HAP-1 (cell line): ENCODE measurements at regions of chr2 and their contacts with region 1.

Region 1: GRCh38 chr2:73163483-73164367 is 38.6 kb upstream of the NOTO start:
- DNase-seq: peak; percentile 77 to 83
- H3K4me3 ChIP-seq: no peak overlapping the region
- H3K4me1 ChIP-seq: no peaks in the 10 kb centered on the region
- H3K27me3 ChIP-seq: 0 out of 2 replicates have a peak, but pooled peaks cover 3% of the 10 kb centered on the region

Region 2: DNA sequence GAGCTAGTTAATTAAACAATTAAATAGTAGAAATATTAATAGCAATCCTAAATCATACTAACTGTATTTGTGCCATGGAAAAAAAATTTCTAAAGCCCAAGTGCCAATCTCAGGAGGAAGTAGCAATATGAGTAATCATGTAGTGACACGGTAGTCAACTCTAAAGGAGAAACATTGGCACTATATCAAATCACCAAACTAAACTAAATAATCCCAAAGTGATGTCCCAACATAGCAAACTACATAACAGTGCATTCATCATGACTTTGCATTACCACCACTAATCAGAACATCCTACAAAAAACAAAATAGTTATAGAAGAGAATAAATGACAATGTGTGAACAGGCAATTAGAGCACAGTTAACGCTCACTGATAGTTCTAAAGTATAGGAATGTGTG is 533.0 kb before region 1 on chr2:
- in situ Hi-C with region 1: no loop called
- DNase-seq: no peak
- H3K4me3 ChIP-seq: no peak overlapping the region
- H3K4me1 ChIP-seq: no peaks in the 10 kb centered on the region
- H3K27me3 ChIP-seq: no peaks in the 10 kb centered on the region

Region 3: GRCh38 chr2:72892506-72893173 is 271.1 kb before region 1 on chr2:
- in situ Hi-C with region 1: loop called (anchors 5 kb)
- DNase-seq: peak in 1 of 2 experiments; percentile 58
- H3K4me3 ChIP-seq: no peak overlapping the region
- H3K4me1 ChIP-seq: peaks cover 4% of the 10 kb centered on the region
- H3K27me3 ChIP-seq: 0 out of 2 replicates have a peak, but pooled peaks cover 2% of the 10 kb centered on the region

Region 4: GRCh38 chr2:72993147-72993932 is 170.4 kb before region 1 on chr2:
- in situ Hi-C with region 1: loop called (anchors 5 kb)
- DNase-seq: peak; percentile 18 to 71
- H3K4me3 ChIP-seq: no peak overlapping the region
- H3K4me1 ChIP-seq: no peaks in the 10 kb centered on the region
- H3K27me3 ChIP-seq: no peaks in the 10 kb centered on the region

Region 5: DNA sequence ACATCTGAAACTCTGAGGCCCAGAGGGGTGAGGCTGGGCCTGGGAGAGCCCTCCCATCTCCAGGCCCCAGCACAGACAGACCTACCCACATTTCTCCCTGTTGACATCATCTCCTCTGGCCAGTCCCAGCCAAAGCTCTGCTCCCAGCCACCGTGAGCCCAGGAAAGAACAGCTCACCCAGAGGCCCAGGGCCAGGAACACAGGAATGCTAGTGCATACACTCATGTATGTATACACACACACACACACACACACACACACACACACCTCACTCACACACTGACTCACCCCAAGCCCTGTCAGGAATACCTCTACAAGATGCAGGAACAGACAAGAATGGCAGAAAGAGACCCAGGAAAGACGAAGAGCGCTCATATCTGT is 74.1 kb before region 1 on chr2:
- in situ Hi-C with region 1: loop called (anchors 5 kb)
- DNase-seq: no peak
- H3K4me3 ChIP-seq: no peak overlapping the region
- H3K4me1 ChIP-seq: no peaks in the 10 kb centered on the region
- H3K27me3 ChIP-seq: no peaks in the 10 kb centered on the region

Region 6: GRCh38 chr2:73343992-73344391 is 180.3 kb after region 1 on chr2:
- in situ Hi-C with region 1: no loop called
- DNase-seq: no peak
- H3K4me3 ChIP-seq: no peak overlapping the region
- H3K4me1 ChIP-seq: no peaks in the 10 kb centered on the region
- H3K27me3 ChIP-seq: peaks cover 7% of the 10 kb centered on the region